Sciatic nerve (tissue), 2 donors: ENCODE measurements at regions of chr5 and their contacts with region 1.

Region 1: GRCh38 chr5:63878788-63879187 is 83.5 kb downstream of the HTR1A start:
- DNase-seq: no peak
- ATAC-seq: no peak

Region 2: DNA sequence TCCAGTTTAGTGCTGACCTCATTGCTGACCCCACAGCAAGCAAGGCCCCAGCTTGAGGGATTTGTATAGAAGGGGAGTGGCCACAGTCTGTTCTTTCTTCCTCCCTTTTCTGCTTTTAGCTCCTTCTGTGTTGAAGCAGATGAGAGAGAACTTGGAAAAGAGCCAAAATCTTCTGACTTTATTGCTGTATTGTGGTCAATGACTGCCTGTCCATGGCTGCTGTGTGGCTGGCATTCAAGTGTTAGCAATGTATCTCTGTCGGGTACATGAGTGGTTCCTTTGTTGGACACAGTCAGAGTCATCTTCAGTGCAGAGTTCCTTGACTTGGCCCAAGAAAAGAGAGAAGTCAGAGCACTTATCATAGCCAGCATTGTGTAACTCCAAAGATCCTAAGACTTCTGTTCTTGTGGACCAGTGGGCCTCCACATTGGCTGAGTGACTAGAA is 1146.1 kb before region 1 on chr5:
- intact Hi-C with region 1: loop called (anchors 10 kb)
- DNase-seq: no peak
- ATAC-seq: peak; percentile 70

Region 3: DNA sequence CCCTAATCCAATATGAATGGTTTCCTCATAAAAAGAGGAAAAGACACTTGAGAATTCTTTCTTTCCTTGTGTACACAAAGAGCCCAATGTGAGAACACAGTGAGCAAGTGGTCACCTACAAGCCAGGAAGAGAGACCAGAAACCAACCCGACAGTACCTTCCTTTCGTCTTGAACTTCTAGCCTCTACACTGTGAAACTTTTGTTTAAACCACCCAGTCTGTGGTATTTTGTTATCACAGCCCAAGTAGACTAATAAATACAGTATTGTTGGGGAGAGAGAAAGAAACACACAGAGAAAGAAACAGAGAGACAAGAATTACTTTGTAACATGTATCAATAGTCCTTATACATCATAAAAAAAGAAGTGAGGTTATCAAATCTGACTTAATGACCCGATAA is 1646.9 kb after region 1 on chr5:
- intact Hi-C with region 1: no loop called
- DNase-seq: no peak
- ATAC-seq: no peak